Activated CD8-positive, alpha-beta T cell treated with anti-CD3 and anti-CD28 coated beads for 36 hours (primary cell): ENCODE measurements at regions of chr11 and their contacts with region 1.

Region 1: DNA sequence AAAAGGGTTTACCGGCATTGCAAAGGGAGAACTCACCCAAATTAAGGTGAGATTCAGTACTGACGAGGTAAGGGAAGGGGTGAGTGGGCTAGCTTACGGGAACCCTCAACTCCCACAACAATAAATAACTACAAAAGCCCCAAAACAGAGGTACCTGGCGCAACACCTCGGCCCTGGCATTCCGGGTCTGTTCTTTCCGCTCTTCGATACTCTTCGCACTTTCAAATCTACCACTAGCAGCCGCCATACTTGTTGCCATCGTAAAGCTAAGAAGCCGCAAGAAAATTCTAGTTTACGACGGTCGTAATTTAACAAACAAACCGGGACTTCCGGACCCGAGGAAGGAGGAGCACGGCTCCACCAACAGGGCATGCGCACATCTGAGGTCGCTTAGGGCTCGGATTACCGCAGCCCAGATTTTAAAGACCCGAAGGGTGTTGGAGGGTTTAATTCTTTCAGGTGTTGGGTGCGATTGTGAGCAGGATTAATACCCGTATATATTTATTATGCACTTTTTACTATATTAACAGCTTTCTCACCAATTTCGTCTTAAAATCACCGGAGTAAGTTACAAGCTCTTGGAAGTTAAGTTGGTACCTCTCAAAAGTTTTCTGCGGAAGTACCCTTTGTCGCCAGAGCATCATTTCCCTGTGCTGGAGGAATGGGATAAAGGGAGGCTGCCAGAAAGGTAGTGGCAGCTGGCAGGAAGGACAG is at the start of gene CWF19L2:
- DNase-seq: peak; percentile 92
- ATAC-seq: peak; percentile 98
- H3K4me3 Mint-ChIP-seq: peak within 1 kb of the TSS; percentile 89
- H3K27ac Mint-ChIP-seq: peak within 1 kb of the TSS; percentile 84
- H3K4me1 Mint-ChIP-seq: peaks cover 27% of the 10 kb centered on the region
- H3K27me3 Mint-ChIP-seq: no peaks in the 10 kb centered on the region
- CTCF ChIP-seq: no peak
- total RNA-seq, gene CWF19L2: 11.9 to 13.6 TPM

Region 2: DNA sequence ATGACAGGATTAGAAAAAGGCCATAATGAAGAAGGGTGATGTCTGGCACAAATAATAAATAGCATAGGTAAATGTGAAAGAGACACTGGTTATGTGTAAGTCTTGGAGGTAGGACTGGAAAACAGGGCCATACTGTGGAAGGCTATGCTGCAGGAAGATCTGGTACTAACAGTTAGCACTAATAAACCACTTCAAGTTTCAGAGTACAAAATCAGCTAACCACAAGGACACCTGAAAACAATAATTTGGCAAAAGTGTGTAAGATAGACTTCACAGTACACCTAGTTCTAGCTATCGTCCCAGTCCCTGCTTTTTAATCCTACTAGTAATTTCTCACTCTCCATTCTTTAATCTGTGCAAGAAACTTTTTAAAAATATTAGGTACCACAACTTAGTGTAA is 44.4 kb before region 1 on chr11:
- CTCF ChIA-PET with region 1: no interaction called
- POLR2A ChIA-PET with region 1: no interaction called
- intact Hi-C with region 1: no loop called
- DNase-seq: no peak
- ATAC-seq: no peak
- H3K4me3 Mint-ChIP-seq: no peak overlapping the region
- H3K27ac Mint-ChIP-seq: no peak overlapping the region
- H3K4me1 Mint-ChIP-seq: peaks cover 6% of the 10 kb centered on the region
- H3K27me3 Mint-ChIP-seq: no peaks in the 10 kb centered on the region
- CTCF ChIP-seq: no peak

Region 3: GRCh38 chr11:107446822-107447431 is 10.8 kb before region 1 on chr11:
- CTCF ChIA-PET with region 1: interaction called, 3 read pairs
- POLR2A ChIA-PET with region 1: interaction called, 11 read pairs
- intact Hi-C with region 1: no loop called
- DNase-seq: no peak
- ATAC-seq: no peak
- H3K4me3 Mint-ChIP-seq: no peak overlapping the region
- H3K27ac Mint-ChIP-seq: no peak overlapping the region
- H3K4me1 Mint-ChIP-seq: peaks cover 32% of the 10 kb centered on the region
- H3K27me3 Mint-ChIP-seq: no peaks in the 10 kb centered on the region
- CTCF ChIP-seq: no peak

Region 4: GRCh38 chr11:107496011-107496410 is 38.3 kb after region 1 on chr11:
- CTCF ChIA-PET with region 1: no interaction called
- POLR2A ChIA-PET with region 1: no interaction called
- intact Hi-C with region 1: no loop called
- DNase-seq: no peak
- ATAC-seq: no peak
- H3K4me3 Mint-ChIP-seq: no peak overlapping the region
- H3K27ac Mint-ChIP-seq: no peak overlapping the region
- H3K4me1 Mint-ChIP-seq: no peaks in the 10 kb centered on the region
- H3K27me3 Mint-ChIP-seq: peaks cover 1% of the 10 kb centered on the region
- CTCF ChIP-seq: no peak

Region 5: GRCh38 chr11:107606141-107606540 is 148.4 kb after region 1 on chr11:
- CTCF ChIA-PET with region 1: no interaction called
- POLR2A ChIA-PET with region 1: no interaction called
- intact Hi-C with region 1: no loop called
- DNase-seq: no peak
- ATAC-seq: no peak
- H3K4me3 Mint-ChIP-seq: no peak overlapping the region
- H3K27ac Mint-ChIP-seq: no peak overlapping the region
- H3K4me1 Mint-ChIP-seq: no peaks in the 10 kb centered on the region
- H3K27me3 Mint-ChIP-seq: peaks cover 47% of the 10 kb centered on the region
- CTCF ChIP-seq: no peak